ENCODE measurements at regions of chr12 and their contacts with region 1.

Region 1: GRCh38 chr12:105053116-105053572 is 31.1 kb downstream of the ALDH1L2 start:
- DNase-seq: peak; percentile 87
- H3K4me3 Mint-ChIP-seq: no peak overlapping the region
- H3K27ac Mint-ChIP-seq: no peak overlapping the region
- H3K4me1 Mint-ChIP-seq: peaks cover 5% of the 10 kb centered on the region
- H3K27me3 Mint-ChIP-seq: no peaks in the 10 kb centered on the region

Region 2: GRCh38 chr12:104680066-104680465 is 373.1 kb before region 1 on chr12:
- CTCF ChIA-PET with region 1: interaction called, 5 read pairs
- POLR2A ChIA-PET with region 1: no interaction called
- intact Hi-C with region 1: loop called (anchors 1 kb)
- DNase-seq: peak; percentile 58
- H3K4me3 Mint-ChIP-seq: no peak overlapping the region
- H3K27ac Mint-ChIP-seq: peak overlapping the region; percentile 75
- H3K4me1 Mint-ChIP-seq: peaks cover 74% of the 10 kb centered on the region
- H3K27me3 Mint-ChIP-seq: no peaks in the 10 kb centered on the region

Region 3: DNA sequence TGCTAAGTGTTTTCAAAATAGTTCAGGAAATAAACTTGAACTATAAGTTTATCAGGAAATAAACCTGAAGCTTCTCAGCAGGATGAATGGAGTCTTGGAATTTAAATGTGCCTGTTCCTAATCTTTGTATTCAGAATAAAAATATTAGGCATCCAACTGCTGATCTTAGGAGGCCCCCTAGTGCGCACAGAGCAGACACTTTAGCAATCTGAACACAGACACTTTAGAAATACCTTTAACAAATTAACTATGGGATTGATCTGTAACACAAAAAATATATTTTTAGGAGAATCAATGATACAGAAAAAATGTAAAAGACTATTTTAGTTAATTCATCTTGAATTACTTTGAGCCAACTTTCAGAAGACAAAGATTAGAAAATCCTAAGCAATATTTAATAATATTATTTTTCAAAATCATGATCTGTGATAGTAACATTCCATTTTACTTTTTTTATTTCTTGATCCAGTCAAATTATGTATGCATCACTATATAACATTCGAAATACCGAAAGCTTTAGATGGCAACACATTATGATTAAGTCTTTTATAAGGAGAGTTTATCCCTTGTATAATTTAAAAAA is 175.9 kb before region 1 on chr12:
- CTCF ChIA-PET with region 1: interaction called, 4 read pairs
- POLR2A ChIA-PET with region 1: no interaction called
- intact Hi-C with region 1: loop called (anchors 2 kb)
- DNase-seq: peak; percentile 40
- H3K4me3 Mint-ChIP-seq: no peak overlapping the region
- H3K27ac Mint-ChIP-seq: no peak overlapping the region
- H3K4me1 Mint-ChIP-seq: peaks cover 3% of the 10 kb centered on the region
- H3K27me3 Mint-ChIP-seq: no peaks in the 10 kb centered on the region

Region 4: GRCh38 chr12:104986022-104986941 is 66.9 kb before region 1 on chr12 and contains the start of gene NOPCHAP1:
- CTCF ChIA-PET with region 1: interaction called, 5 read pairs
- POLR2A ChIA-PET with region 1: no interaction called
- intact Hi-C with region 1: loop called (anchors 5 kb)
- DNase-seq: peak; percentile 91
- H3K4me3 Mint-ChIP-seq: peak within 1 kb of the TSS; percentile 77
- H3K27ac Mint-ChIP-seq: peak within 1 kb of the TSS; percentile 59
- H3K4me1 Mint-ChIP-seq: peaks cover 28% of the 10 kb centered on the region
- H3K27me3 Mint-ChIP-seq: peaks cover 3% of the 10 kb centered on the region
- total RNA-seq, gene NOPCHAP1: 30.5 to 30.9 TPM

Region 5: DNA sequence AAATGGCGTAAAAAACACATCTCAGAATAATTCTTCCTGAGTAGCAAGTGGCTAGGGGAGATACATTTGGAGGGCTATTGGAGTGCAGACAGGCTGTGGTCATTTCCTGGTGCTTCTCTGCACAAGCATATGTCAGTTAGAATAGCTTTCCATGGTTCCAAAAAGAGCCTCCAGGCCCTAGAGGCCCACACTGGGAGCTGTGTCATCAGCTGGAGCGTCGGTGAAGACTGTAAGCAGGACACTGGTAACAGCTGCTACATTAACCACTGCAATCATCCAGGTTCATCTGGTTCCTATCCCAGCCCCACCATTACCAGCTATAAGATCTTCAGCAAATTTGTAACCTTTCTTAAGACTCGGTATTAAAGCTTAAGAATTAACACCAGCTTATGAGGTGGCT is 214.6 kb after region 1 on chr12:
- CTCF ChIA-PET with region 1: no interaction called
- POLR2A ChIA-PET with region 1: no interaction called
- intact Hi-C with region 1: no loop called
- DNase-seq: no peak
- H3K4me3 Mint-ChIP-seq: no peak overlapping the region
- H3K27ac Mint-ChIP-seq: no peak overlapping the region
- H3K4me1 Mint-ChIP-seq: no peaks in the 10 kb centered on the region
- H3K27me3 Mint-ChIP-seq: no peaks in the 10 kb centered on the region